ENCODE measurements at regions of chr2 and their contacts with region 1.

Region 1: GRCh38 chr2:99141110-99142108 is at the start of gene C2orf15:
- DNase-seq: peak; percentile 94
- ATAC-seq: peak; percentile 93
- H3K4me3 ChIP-seq: peak within 1 kb of the TSS; percentile 75 to 92 (median 85)
- H3K27ac ChIP-seq: peak within 1 kb of the TSS; percentile 74
- H3K4me1 ChIP-seq: peaks cover 28% of the 10 kb centered on the region
- H3K27me3 ChIP-seq: no peaks in the 10 kb centered on the region
- CTCF ChIP-seq: no peak; the same call in 1 of the 2 replicates
- EP300 ChIP-seq: 0 out of 4 replicates have a peak, but pooled peaks of 1 of the 2 experiments have one; percentile 1
- POLR2A ChIP-seq: peak; percentile 89 to 99
- RAD21 ChIP-seq: no peak
- total RNA-seq, gene C2orf15: 8.3 and 12.2 TPM in 2 replicates

Region 2: GRCh38 chr2:99154643-99155536 is 13.5 kb after region 1 on chr2 and contains the starts of genes LIPT1 and TSGA10:
- CTCF ChIA-PET with region 1: no interaction called
- POLR2A ChIA-PET with region 1: interaction called, 140 read pairs
- in situ Hi-C with region 1: no loop called
- intact Hi-C with region 1: loop called (anchors 1 kb)
- DNase-seq: peak; percentile 93
- ATAC-seq: peak; percentile 97
- H3K4me3 ChIP-seq: peak within 1 kb of the TSS; percentile 80 to 90 (median 85)
- H3K27ac ChIP-seq: peak within 1 kb of the TSS; percentile 79
- H3K4me1 ChIP-seq: peaks cover 44% of the 10 kb centered on the region
- H3K27me3 ChIP-seq: no peaks in the 10 kb centered on the region; a peak in 1 of 5 replicates
- CTCF ChIP-seq: peak; percentile 54
- EP300 ChIP-seq: no peak; a peak in 1 of 4 replicates
- POLR2A ChIP-seq: peak; percentile 93 to 99
- RAD21 ChIP-seq: peak; percentile 50; the same call in 1 of the 2 replicates
- total RNA-seq, gene LIPT1: 8.0 and 8.3 TPM in 2 replicates
- total RNA-seq, gene TSGA10: 13.1 and 15.0 TPM in 2 replicates

Region 3: GRCh38 chr2:99489761-99490622 is 348.6 kb after region 1 on chr2 and contains the start of gene REV1:
- CTCF ChIA-PET with region 1: no interaction called
- POLR2A ChIA-PET with region 1: interaction called, 4 read pairs
- in situ Hi-C with region 1: no loop called
- intact Hi-C with region 1: loop called (anchors 5 kb)
- DNase-seq: peak; percentile 91
- ATAC-seq: peak; percentile 86
- H3K4me3 ChIP-seq: peak within 1 kb of the TSS; percentile 79 to 99 (median 97)
- H3K27ac ChIP-seq: peak within 1 kb of the TSS; percentile 76
- H3K4me1 ChIP-seq: peaks cover 42% of the 10 kb centered on the region
- H3K27me3 ChIP-seq: no peaks in the 10 kb centered on the region; a peak in 3 of 5 replicates
- CTCF ChIP-seq: peak; percentile 93
- EP300 ChIP-seq: peak in 1 of 2 experiments; percentile 23; a peak in 2 of 4 replicates
- POLR2A ChIP-seq: peak in 1 of 2 experiments; percentile 80; a peak in 3 of 4 replicates
- RAD21 ChIP-seq: peak; percentile 94
- total RNA-seq, gene REV1: 38.5 and 49.1 TPM in 2 replicates

Region 4: DNA sequence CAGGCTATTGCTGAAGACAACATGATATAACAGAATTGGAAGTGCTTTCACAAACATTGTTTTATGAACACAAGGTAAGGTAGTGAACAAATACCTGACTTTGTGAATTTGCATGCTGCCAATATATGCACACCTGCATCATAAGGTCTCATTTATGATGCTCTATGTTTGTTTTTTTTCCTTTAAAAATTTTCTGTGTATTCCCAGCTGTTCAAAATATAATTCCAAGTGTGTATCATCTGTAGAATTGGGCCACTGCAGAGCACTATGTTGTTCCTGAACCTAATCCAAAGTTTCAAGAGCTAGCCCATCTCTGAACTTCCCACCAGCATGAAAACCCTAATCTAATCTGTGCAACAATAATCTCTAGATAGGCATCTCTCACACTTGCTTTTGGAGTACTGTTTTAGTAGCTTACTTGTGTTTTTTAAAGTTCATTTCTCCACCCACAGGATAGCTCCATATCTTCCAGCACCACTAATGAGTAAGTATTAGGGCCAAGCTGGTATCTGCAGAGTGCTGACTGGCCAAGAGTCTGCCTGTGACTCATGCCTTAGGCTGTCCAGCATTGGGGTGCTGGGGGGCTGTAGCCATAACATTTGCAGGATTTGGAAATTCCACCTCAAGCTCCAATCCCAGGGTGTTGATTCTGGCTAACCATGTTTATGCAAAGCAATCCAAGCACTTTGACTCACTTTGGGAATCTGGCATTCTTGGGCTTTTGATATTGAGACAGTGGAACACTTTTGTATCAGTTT is 556.6 kb after region 1 on chr2:
- CTCF ChIA-PET with region 1: no interaction called
- POLR2A ChIA-PET with region 1: no interaction called
- in situ Hi-C with region 1: no loop called
- intact Hi-C with region 1: no loop called
- DNase-seq: no peak
- ATAC-seq: no peak
- H3K4me3 ChIP-seq: no peak overlapping the region
- H3K27ac ChIP-seq: no peak overlapping the region
- H3K4me1 ChIP-seq: no peaks in the 10 kb centered on the region
- H3K27me3 ChIP-seq: no peaks in the 10 kb centered on the region; a peak in 1 of 5 replicates
- CTCF ChIP-seq: no peak
- EP300 ChIP-seq: no peak
- POLR2A ChIP-seq: no peak
- RAD21 ChIP-seq: no peak